ENCODE measurements at regions of chr3 and their contacts with region 1.

Region 1: GRCh38 chr3:156353536-156353935 is 201.4 kb downstream of the SSR3 start:
- DNase-seq: no peak
- H3K4me3 ChIP-seq: no peak overlapping the region
- H3K27ac ChIP-seq: no peak overlapping the region
- H3K4me1 ChIP-seq: no peaks in the 10 kb centered on the region
- H3K27me3 ChIP-seq: no peaks in the 10 kb centered on the region
- CTCF ChIP-seq: no peak

Region 2: GRCh38 chr3:156382458-156383346 is 29.2 kb after region 1 on chr3:
- CTCF ChIA-PET with region 1: no interaction called
- POLR2A ChIA-PET with region 1: interaction called, 21 read pairs
- intact Hi-C with region 1: no loop called
- DNase-seq: peak in 1 of 2 experiments; percentile 25
- H3K4me3 ChIP-seq: no peak overlapping the region
- H3K27ac ChIP-seq: no peak overlapping the region
- H3K4me1 ChIP-seq: no peaks in the 10 kb centered on the region
- H3K27me3 ChIP-seq: peaks cover 9% of the 10 kb centered on the region; the same call in 1 of the 2 replicates
- CTCF ChIP-seq: peak; percentile 82

Region 3: GRCh38 chr3:156772581-156773206 is 419.2 kb after region 1 on chr3:
- CTCF ChIA-PET with region 1: no interaction called
- POLR2A ChIA-PET with region 1: no interaction called
- intact Hi-C with region 1: no loop called
- DNase-seq: no peak
- H3K4me3 ChIP-seq: no peak overlapping the region
- H3K27ac ChIP-seq: no peak overlapping the region
- H3K4me1 ChIP-seq: peaks cover 8% of the 10 kb centered on the region; the same call in 1 of the 2 replicates
- H3K27me3 ChIP-seq: no peaks in the 10 kb centered on the region
- CTCF ChIP-seq: no peak